Caco-2 (cell line): ENCODE measurements at regions of chr20 and their contacts with region 1.

Region 1: GRCh38 chr20:2914160-2914559 is 40.9 kb downstream of the PTPRA start:
- DNase-seq: peak in 1 of 2 experiments; percentile 39
- H3K4me3 ChIP-seq: no peak overlapping the region
- H3K4me3 Mint-ChIP-seq: no peak overlapping the region
- H3K27ac Mint-ChIP-seq: no peak overlapping the region
- H3K4me1 ChIP-seq: peaks cover 17% of the 10 kb centered on the region
- H3K4me1 Mint-ChIP-seq: peaks cover under 1% of the 10 kb centered on the region
- H3K27me3 ChIP-seq: no peaks in the 10 kb centered on the region
- H3K27me3 Mint-ChIP-seq: no peaks in the 10 kb centered on the region
- CTCF ChIP-seq: peak; percentile 40 to 52

Region 2: DNA sequence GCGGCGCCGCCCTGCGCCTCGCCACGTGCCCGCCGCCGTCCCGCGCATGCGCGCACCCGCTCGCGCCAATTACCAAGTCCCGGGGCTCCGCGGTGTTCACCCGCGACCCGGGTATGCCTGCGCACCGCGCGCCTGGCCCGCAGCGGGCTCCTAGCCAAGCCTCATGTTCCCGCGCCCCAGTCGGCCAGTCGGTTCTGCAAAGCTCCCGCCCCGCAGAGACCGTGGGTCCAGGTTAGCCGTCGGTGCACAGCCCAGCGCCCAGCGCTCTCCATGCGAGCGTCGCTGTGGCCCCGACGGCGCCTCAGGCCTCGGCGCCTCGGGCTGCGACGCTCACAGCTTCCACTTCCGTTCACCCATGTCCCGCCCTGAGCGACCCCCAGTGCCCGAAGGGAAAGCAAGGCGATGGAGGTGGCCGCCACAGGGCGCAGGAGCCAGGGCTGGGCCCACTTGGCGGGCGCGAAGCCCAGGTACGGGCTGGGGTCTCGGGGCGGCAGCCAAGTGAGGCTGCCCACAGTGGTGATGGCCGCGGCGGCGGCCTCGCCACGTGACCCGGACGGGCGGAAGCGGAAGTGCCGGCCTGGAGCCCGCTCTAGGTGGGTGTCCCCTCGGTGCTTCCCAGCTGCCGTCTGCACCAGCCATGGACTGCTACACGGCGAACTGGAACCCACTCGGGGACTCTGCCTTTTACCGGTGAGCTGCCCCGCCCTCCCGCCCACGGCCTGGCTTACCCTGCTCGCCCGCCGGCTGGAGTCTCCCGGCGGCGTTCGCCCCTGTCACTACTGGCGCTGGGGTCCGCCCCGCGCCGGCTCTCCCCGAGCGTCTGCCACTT is 73.8 kb before region 1 on chr20 and contains the starts of genes PCED1A and VPS16:
- CTCF ChIA-PET with region 1: no interaction called
- POLR2A ChIA-PET with region 1: no interaction called
- intact Hi-C with region 1: no loop called
- DNase-seq: peak; percentile 90 to 93
- H3K4me3 ChIP-seq: peak within 1 kb of the TSS; percentile 91
- H3K4me3 Mint-ChIP-seq: peak within 1 kb of the TSS; percentile 89
- H3K27ac Mint-ChIP-seq: peak within 1 kb of the TSS; percentile 97
- H3K4me1 ChIP-seq: peaks cover 8% of the 10 kb centered on the region; the same call in 1 of the 2 replicates
- H3K4me1 Mint-ChIP-seq: peaks cover 7% of the 10 kb centered on the region
- H3K27me3 ChIP-seq: no peaks in the 10 kb centered on the region
- H3K27me3 Mint-ChIP-seq: no peaks in the 10 kb centered on the region
- CTCF ChIP-seq: no peak
- total RNA-seq, gene PCED1A: 43.9 and 44.7 TPM in 2 replicates
- total RNA-seq, gene VPS16: 41.3 and 46.6 TPM in 2 replicates

Region 3: DNA sequence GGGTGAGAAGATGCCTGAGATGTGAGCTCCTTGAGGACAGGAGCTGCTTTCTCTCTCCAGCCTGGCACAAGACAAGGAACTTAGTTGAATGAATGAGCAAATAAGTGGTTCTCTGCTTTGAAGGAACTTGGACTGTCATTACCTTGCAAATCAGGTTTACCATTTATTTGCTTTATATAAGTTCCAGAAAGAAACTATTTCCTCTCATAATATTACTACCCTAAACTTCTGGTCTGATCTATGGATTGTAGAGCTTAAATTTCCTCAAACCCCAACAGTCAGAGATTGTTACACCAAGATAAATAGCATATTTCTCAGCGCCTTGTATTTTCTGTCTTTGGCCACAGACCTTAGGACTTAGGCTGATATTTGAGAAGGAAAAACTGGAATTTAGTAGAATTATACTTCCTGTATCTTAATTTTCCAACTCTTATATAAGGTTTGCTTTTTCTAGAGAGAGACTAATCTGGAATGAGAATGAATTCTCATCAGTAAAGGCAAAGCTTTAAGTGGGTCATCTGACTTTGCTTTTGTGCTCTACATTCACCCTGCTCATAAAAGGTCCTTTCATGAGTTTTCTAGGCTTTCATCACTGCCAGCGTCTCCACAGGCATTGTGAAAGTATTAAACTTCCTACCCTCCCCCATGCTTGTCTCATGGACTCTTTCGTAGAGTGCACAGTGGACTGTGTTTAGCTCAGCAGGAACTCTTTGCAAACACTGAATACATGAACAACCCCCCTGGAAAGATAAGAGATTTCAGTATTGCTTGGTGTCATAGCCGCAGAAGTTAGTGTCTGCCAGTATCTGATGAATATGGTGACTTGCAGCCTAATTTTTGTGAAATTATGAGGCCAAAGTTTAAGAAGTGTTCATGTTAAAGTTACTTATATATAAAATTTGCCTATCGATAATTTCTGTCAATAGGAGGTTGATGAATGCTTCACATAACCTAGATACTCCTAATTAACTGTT is 33.1 kb after region 1 on chr20:
- CTCF ChIA-PET with region 1: interaction called, 10 read pairs
- POLR2A ChIA-PET with region 1: no interaction called
- intact Hi-C with region 1: no loop called
- DNase-seq: peak; percentile 47 to 61
- H3K4me3 ChIP-seq: no peak overlapping the region
- H3K4me3 Mint-ChIP-seq: peak overlapping the region; percentile 6
- H3K27ac Mint-ChIP-seq: no peak overlapping the region
- H3K4me1 ChIP-seq: peaks cover 5% of the 10 kb centered on the region
- H3K4me1 Mint-ChIP-seq: peaks cover 23% of the 10 kb centered on the region
- H3K27me3 ChIP-seq: no peaks in the 10 kb centered on the region
- H3K27me3 Mint-ChIP-seq: no peaks in the 10 kb centered on the region
- CTCF ChIP-seq: no peak

Region 4: DNA sequence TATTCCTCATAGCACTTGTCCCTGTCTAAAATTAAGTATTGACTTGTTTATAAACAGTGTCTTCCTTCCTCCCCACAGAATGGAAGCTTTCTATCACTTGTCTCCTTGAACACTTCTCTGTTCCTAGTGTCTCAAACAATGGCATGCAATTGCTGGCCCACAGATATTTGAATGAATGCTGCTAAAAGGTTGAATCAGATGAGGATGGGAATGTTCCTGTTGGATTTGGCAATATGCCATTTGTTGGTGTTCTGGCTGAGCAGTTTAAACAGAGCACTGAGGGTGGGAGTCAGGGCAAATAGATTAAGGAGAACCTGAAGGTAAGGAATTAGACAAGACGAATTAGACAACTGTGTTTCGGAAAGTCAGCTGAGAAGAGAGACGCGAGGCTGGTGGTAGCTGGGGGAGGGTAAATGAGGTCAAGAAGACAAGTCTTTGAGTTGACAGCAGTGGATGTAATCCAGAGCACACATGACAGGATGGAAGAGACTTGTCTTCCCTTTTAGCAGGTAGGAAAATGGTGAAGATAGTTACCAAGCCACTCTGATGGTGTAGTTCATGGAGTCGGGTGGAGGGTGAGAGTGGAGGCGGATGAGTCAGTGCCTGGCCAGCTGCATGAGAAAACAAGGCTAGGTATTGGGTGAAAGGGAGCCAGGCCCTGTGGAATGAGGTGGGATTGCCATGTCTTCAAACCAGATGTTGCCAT is 70.9 kb after region 1 on chr20:
- CTCF ChIA-PET with region 1: no interaction called
- POLR2A ChIA-PET with region 1: no interaction called
- intact Hi-C with region 1: loop called (anchors 5 kb)
- DNase-seq: no peak
- H3K4me3 ChIP-seq: no peak overlapping the region
- H3K4me3 Mint-ChIP-seq: no peak overlapping the region
- H3K27ac Mint-ChIP-seq: no peak overlapping the region
- H3K4me1 ChIP-seq: no peaks in the 10 kb centered on the region
- H3K4me1 Mint-ChIP-seq: no peaks in the 10 kb centered on the region
- H3K27me3 ChIP-seq: no peaks in the 10 kb centered on the region
- H3K27me3 Mint-ChIP-seq: no peaks in the 10 kb centered on the region
- CTCF ChIP-seq: no peak

Region 5: GRCh38 chr20:3000852-3001523 is 86.8 kb after region 1 on chr20:
- CTCF ChIA-PET with region 1: interaction called, 26 read pairs
- POLR2A ChIA-PET with region 1: no interaction called
- intact Hi-C with region 1: loop called (anchors 1 kb)
- DNase-seq: peak in 1 of 2 experiments; percentile 60
- H3K4me3 ChIP-seq: no peak overlapping the region
- H3K4me3 Mint-ChIP-seq: no peak overlapping the region
- H3K27ac Mint-ChIP-seq: no peak overlapping the region
- H3K4me1 ChIP-seq: no peaks in the 10 kb centered on the region
- H3K4me1 Mint-ChIP-seq: no peaks in the 10 kb centered on the region
- H3K27me3 ChIP-seq: no peaks in the 10 kb centered on the region
- H3K27me3 Mint-ChIP-seq: no peaks in the 10 kb centered on the region
- CTCF ChIP-seq: peak; percentile 51 to 60